Activated B cell treated with CpG ODN at 0.5 μM for 24 hours (primary cell): ENCODE measurements at regions of chr14 and their contacts with region 1.

Region 1: DNA sequence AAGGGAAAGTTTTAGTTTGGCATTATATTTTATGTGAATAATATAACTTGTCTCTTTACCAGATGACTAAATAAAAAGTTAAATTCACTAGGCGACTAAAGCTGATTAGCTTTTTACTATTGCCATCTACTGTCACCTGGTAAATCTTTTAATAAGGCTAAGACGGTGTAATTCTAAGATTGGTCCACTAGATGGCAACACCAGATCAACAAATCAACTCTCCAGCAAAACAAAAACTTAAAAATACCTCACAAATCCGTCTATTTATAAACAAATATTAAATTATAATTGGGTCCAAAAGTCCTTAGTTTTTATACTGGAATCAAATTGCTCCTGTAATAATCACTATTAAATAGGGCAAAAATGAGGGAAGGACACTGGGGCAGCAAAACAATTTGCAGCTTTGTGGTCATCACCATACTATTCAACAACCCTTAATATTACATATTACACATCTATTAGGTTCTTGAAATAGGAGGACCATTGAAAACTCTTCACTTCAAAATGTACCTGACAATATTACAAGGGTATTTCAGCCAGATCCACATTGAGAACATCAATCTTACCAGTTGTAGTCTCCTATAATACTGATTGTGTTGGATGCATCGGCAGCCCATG is 47.9 kb downstream of the GALC start:
- DNase-seq: no peak
- ATAC-seq: no peak
- H3K4me3 Mint-ChIP-seq: no peak overlapping the region
- H3K27ac Mint-ChIP-seq: no peak overlapping the region
- H3K4me1 Mint-ChIP-seq: no peaks in the 10 kb centered on the region
- H3K27me3 Mint-ChIP-seq: no peaks in the 10 kb centered on the region
- CTCF ChIP-seq: no peak

Region 2: DNA sequence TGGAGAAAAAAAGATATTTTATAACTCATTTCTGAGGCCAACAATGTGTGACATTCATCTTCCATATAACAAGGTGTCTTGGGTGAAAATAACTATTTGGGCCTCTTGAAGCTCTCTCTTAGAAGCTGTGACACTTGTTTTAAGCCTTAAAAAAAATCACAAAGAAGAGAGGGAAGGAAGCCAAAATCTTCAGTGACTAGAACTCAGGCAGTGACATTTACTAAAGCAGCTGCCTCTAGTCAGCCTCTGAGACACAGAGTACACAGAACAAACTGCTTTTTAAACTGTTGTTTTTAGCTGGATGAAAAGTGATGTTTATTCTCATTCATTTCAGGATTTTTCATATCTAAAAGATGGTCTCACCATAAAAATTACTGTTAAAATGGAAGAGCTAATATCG is 745.7 kb before region 1 on chr14:
- CTCF ChIA-PET with region 1: no interaction called
- POLR2A ChIA-PET with region 1: no interaction called
- intact Hi-C with region 1: no loop called
- DNase-seq: no peak
- ATAC-seq: no peak
- H3K4me3 Mint-ChIP-seq: no peak overlapping the region
- H3K27ac Mint-ChIP-seq: no peak overlapping the region
- H3K4me1 Mint-ChIP-seq: no peaks in the 10 kb centered on the region
- H3K27me3 Mint-ChIP-seq: no peaks in the 10 kb centered on the region
- CTCF ChIP-seq: no peak

Region 3: GRCh38 chr14:87916103-87916885 is 28.8 kb before region 1 on chr14:
- CTCF ChIA-PET with region 1: no interaction called
- POLR2A ChIA-PET with region 1: no interaction called
- intact Hi-C with region 1: no loop called
- DNase-seq: no peak
- ATAC-seq: no peak
- H3K4me3 Mint-ChIP-seq: no peak overlapping the region
- H3K27ac Mint-ChIP-seq: no peak overlapping the region
- H3K4me1 Mint-ChIP-seq: no peaks in the 10 kb centered on the region
- H3K27me3 Mint-ChIP-seq: peaks cover 6% of the 10 kb centered on the region
- CTCF ChIP-seq: no peak

Region 4: GRCh38 chr14:88013750-88014349 is 68.8 kb after region 1 on chr14:
- CTCF ChIA-PET with region 1: interaction called, 35 read pairs
- POLR2A ChIA-PET with region 1: no interaction called
- intact Hi-C with region 1: loop called (anchors 1 kb)
- DNase-seq: no peak
- ATAC-seq: peak; percentile 83
- H3K4me3 Mint-ChIP-seq: no peak overlapping the region
- H3K27ac Mint-ChIP-seq: peak overlapping the region; percentile 2
- H3K4me1 Mint-ChIP-seq: peaks cover 42% of the 10 kb centered on the region
- H3K27me3 Mint-ChIP-seq: no peaks in the 10 kb centered on the region
- CTCF ChIP-seq: peak; percentile 39

Region 5: GRCh38 chr14:88189417-88190191 is 244.5 kb after region 1 on chr14:
- CTCF ChIA-PET with region 1: interaction called, 18 read pairs
- POLR2A ChIA-PET with region 1: no interaction called
- intact Hi-C with region 1: loop called (anchors 1 kb)
- DNase-seq: no peak
- ATAC-seq: peak; percentile 71
- H3K4me3 Mint-ChIP-seq: peak overlapping the region; percentile 56
- H3K27ac Mint-ChIP-seq: no peak overlapping the region
- H3K4me1 Mint-ChIP-seq: peaks cover 7% of the 10 kb centered on the region
- H3K27me3 Mint-ChIP-seq: peaks cover 8% of the 10 kb centered on the region
- CTCF ChIP-seq: no peak

Region 6: GRCh38 chr14:88380405-88380804 is 435.3 kb after region 1 on chr14:
- CTCF ChIA-PET with region 1: interaction called, 9 read pairs
- POLR2A ChIA-PET with region 1: no interaction called
- intact Hi-C with region 1: loop called (anchors 2 kb)
- DNase-seq: no peak
- ATAC-seq: no peak
- H3K4me3 Mint-ChIP-seq: no peak overlapping the region
- H3K27ac Mint-ChIP-seq: no peak overlapping the region
- H3K4me1 Mint-ChIP-seq: peaks cover 7% of the 10 kb centered on the region
- H3K27me3 Mint-ChIP-seq: peaks cover 2% of the 10 kb centered on the region
- CTCF ChIP-seq: no peak

Region 7: DNA sequence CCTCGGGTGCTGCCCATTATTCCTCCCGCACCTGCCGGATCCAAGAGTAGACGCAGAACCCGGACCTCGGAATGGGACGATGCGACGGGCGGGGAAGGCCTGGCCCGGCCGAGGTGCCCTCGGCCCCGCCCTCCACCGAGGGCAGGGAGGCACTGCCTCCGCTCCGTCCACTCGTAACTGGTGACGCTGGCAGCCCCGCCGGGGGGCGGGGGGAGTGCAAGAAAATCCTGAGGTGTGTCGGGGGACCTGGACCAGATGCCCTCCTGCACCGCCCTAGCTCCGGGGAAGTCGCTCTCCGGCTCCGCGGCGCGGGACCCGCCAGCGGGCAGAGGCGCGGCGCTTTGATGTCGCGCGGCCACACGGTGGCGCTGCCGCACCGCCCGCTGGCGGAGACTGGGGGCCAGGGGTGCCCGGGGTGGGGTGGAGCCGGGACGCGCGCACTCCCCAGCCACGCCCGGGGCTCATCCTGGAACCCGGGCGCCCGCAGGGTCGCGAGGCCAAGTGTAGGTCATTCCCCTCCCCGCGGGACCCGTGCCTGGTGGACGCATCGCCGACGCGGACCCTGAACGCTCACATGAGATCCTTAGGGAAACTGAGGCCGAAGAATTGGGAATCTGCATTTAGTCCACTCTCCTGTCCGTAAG is 1082.1 kb after region 1 on chr14:
- CTCF ChIA-PET with region 1: no interaction called
- POLR2A ChIA-PET with region 1: no interaction called
- intact Hi-C with region 1: loop called (anchors 10 kb)
- DNase-seq: peak; percentile 67
- ATAC-seq: peak; percentile 92
- H3K4me3 Mint-ChIP-seq: peak overlapping the region; percentile 65
- H3K27ac Mint-ChIP-seq: no peak overlapping the region
- H3K4me1 Mint-ChIP-seq: peaks cover 3% of the 10 kb centered on the region
- H3K27me3 Mint-ChIP-seq: peaks cover 41% of the 10 kb centered on the region
- CTCF ChIP-seq: peak; percentile 54